ENCODE measurements at regions of chr10 and their contacts with region 1.

Region 1: GRCh38 chr10:122374237-122374869 is at the start of gene PLEKHA1:
- DNase-seq: peak; percentile 92 to 94 (median 93)
- H3K4me3 ChIP-seq: peak within 1 kb of the TSS; percentile 64 to 89
- H3K4me3 Mint-ChIP-seq: peak within 1 kb of the TSS; percentile 89 to 97 (median 96)
- H3K27ac ChIP-seq: peak within 1 kb of the TSS; percentile 94
- H3K27ac Mint-ChIP-seq: peak within 1 kb of the TSS; percentile 89 to 98 (median 96)
- H3K4me1 ChIP-seq: peaks cover 39% of the 10 kb centered on the region
- H3K4me1 Mint-ChIP-seq: peaks cover 23 to 51% (median 35%) of the 10 kb centered on the region in 4 donors
- H3K27me3 ChIP-seq: peaks cover 4% of the 10 kb centered on the region
- H3K27me3 Mint-ChIP-seq: peaks cover 7 to 11% of the 10 kb centered on the region in 2 donors
- total RNA-seq, gene PLEKHA1: 62.9 to 69.7 TPM

Region 2: GRCh38 chr10:121927841-121928527 is 446.4 kb before region 1 on chr10 and contains the start of gene ATE1:
- CTCF ChIA-PET with region 1: no interaction called
- POLR2A ChIA-PET with region 1: no interaction called
- intact Hi-C with region 1: loop called (anchors 2 kb)
- DNase-seq: peak; percentile 80 to 83 (median 81)
- H3K4me3 ChIP-seq: peak within 1 kb of the TSS; percentile 65 to 97
- H3K4me3 Mint-ChIP-seq: peak within 1 kb of the TSS; percentile 92 to 97 (median 94)
- H3K27ac ChIP-seq: peak within 1 kb of the TSS; percentile 90
- H3K27ac Mint-ChIP-seq: peak within 1 kb of the TSS; percentile 89 to 99 (median 97)
- H3K4me1 ChIP-seq: peaks cover 17% of the 10 kb centered on the region
- H3K4me1 Mint-ChIP-seq: peaks cover 13 to 38% (median 27%) of the 10 kb centered on the region in 4 donors
- H3K27me3 ChIP-seq: no peaks in the 10 kb centered on the region
- H3K27me3 Mint-ChIP-seq: no peaks in the 10 kb centered on the region
- total RNA-seq, gene ATE1: 24.5 to 26.2 TPM

Region 3: GRCh38 chr10:122336332-122336731 is 38.0 kb before region 1 on chr10:
- CTCF ChIA-PET with region 1: no interaction called
- POLR2A ChIA-PET with region 1: no interaction called
- intact Hi-C with region 1: no loop called
- DNase-seq: peak in 1 of 5 donors; percentile 38
- H3K4me3 ChIP-seq: no peak overlapping the region
- H3K4me3 Mint-ChIP-seq: no peak overlapping the region
- H3K27ac ChIP-seq: no peak overlapping the region
- H3K27ac Mint-ChIP-seq: no peak overlapping the region
- H3K4me1 ChIP-seq: no peaks in the 10 kb centered on the region
- H3K4me1 Mint-ChIP-seq: no peaks in the 10 kb centered on the region
- H3K27me3 ChIP-seq: no peaks in the 10 kb centered on the region
- H3K27me3 Mint-ChIP-seq: peaks cover 5 to 13% of the 10 kb centered on the region in 2 donors

Region 4: GRCh38 chr10:122391875-122392274 is 17.5 kb after region 1 on chr10:
- CTCF ChIA-PET with region 1: interaction called, 4 read pairs
- POLR2A ChIA-PET with region 1: interaction called, 14 read pairs
- intact Hi-C with region 1: loop called (anchors 2 kb)
- DNase-seq: no peak
- H3K4me3 ChIP-seq: no peak overlapping the region
- H3K4me3 Mint-ChIP-seq: no peak overlapping the region
- H3K27ac ChIP-seq: no peak overlapping the region
- H3K27ac Mint-ChIP-seq: no peak overlapping the region
- H3K4me1 ChIP-seq: peaks cover 14% of the 10 kb centered on the region
- H3K4me1 Mint-ChIP-seq: peaks cover 24 to 52% (median 39%) of the 10 kb centered on the region in 4 donors
- H3K27me3 ChIP-seq: no peaks in the 10 kb centered on the region
- H3K27me3 Mint-ChIP-seq: no peaks in the 10 kb centered on the region

Region 5: DNA sequence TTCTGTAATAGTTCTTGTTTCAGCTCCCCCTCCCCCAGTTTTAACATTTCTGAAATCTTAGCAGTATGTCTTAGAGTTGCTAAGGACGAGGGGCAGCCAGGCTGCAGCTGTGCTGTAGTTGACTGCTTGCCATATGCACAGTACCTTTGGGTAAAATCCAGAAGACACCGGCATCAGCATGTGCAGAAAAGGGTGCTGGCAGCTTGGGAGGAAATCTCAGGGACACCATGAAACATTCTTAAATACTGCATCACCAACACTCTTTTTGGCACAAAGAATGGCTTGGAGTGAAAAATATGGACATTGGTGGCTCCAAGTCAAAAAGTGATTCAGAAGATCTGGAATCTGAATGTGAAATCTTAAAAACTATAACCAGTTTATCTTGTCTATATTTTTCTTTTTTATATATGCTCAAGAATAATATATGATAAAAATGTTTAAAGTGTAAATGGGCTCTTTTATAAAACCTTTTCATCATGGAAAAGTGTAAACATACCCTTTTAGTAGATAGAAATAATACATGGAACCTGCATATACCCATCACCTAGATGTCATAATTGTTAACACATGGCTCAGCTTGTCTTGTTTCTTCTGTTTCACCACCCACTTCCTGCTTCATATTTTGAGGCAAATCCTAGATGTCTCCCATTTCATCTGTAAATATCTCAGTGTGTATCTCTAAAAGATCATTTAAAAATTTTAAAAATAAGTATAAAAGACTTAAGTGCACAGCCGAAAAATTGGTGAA is 45.7 kb after region 1 on chr10:
- CTCF ChIA-PET with region 1: interaction called, 17 read pairs
- POLR2A ChIA-PET with region 1: interaction called, 45 read pairs
- intact Hi-C with region 1: loop called (anchors 2 kb)
- DNase-seq: no peak
- H3K4me3 ChIP-seq: no peak overlapping the region
- H3K4me3 Mint-ChIP-seq: peak overlapping the region in 4 of 8 donors; percentile 38 to 71 (median 48)
- H3K27ac ChIP-seq: no peak overlapping the region
- H3K27ac Mint-ChIP-seq: peak overlapping the region in 6 of 7 donors; percentile 48 to 95 (median 88)
- H3K4me1 ChIP-seq: peaks cover 84% of the 10 kb centered on the region
- H3K4me1 Mint-ChIP-seq: peaks cover 58 to 90% (median 72%) of the 10 kb centered on the region in 4 donors
- H3K27me3 ChIP-seq: no peaks in the 10 kb centered on the region
- H3K27me3 Mint-ChIP-seq: no peaks in the 10 kb centered on the region

Region 6: GRCh38 chr10:122879339-122880273 is 505.3 kb after region 1 on chr10 and contains the start of gene FAM24B:
- CTCF ChIA-PET with region 1: no interaction called
- POLR2A ChIA-PET with region 1: no interaction called
- intact Hi-C with region 1: loop called (anchors 1 kb)
- DNase-seq: peak; percentile 90 to 96 (median 96)
- H3K4me3 ChIP-seq: peak within 1 kb of the TSS; percentile 47 to 79
- H3K4me3 Mint-ChIP-seq: peak within 1 kb of the TSS; percentile 91 to 95 (median 92)
- H3K27ac ChIP-seq: peak within 1 kb of the TSS; percentile 68
- H3K27ac Mint-ChIP-seq: peak within 1 kb of the TSS; percentile 79 to 97 (median 95)
- H3K4me1 ChIP-seq: peaks cover 41% of the 10 kb centered on the region
- H3K4me1 Mint-ChIP-seq: peaks cover 31 to 55% (median 43%) of the 10 kb centered on the region in 4 donors
- H3K27me3 ChIP-seq: no peaks in the 10 kb centered on the region
- H3K27me3 Mint-ChIP-seq: no peaks in the 10 kb centered on the region
- total RNA-seq, gene FAM24B: 10.8 to 12.8 TPM

Region 7: DNA sequence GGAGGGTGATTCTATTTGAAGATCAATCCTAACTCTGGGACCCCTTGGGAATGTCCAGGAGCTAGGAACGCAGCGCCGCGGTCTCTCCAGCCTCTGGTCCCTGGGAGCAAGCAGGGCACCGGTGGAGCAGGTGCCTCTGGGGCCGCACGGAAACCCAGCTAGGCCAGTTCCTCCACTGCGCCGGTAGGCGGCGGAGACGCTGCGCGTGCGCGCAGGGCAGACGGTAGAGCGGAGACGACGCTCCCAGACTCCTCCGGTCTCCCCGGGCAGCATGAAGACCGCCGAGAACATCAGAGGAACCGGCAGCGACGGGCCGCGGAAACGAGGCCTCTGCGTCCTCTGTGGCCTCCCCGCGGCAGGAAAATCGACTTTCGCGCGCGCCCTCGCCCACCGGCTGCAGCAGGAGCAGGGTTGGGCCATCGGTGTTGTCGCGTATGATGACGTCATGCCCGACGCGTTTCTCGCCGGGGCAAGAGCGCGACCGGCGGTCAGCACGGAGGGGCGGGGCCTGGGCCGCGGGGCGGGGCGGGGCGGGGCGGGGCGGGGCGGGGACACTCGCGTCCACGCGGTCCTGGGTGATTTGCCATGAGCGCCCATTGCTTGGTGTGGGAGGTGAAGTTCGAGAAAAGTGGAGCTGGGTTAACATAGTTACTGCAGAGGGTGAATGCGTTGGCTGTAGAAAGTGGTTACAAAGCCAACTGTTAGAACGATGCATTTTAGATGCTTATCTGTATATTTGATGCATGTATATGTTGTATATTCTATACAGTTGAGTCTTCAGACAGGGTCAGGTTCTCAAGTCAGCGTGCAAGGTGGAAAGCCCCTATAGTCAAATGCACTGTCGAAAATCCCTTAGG is 606.1 kb after region 1 on chr10 and contains the start of gene PSTK:
- CTCF ChIA-PET with region 1: no interaction called
- POLR2A ChIA-PET with region 1: no interaction called
- intact Hi-C with region 1: loop called (anchors 1 kb)
- DNase-seq: peak; percentile 90 to 94 (median 91)
- H3K4me3 ChIP-seq: peak within 1 kb of the TSS; percentile 19 to 88
- H3K4me3 Mint-ChIP-seq: peak within 1 kb of the TSS; percentile 90 to 94 (median 92)
- H3K27ac ChIP-seq: peak within 1 kb of the TSS; percentile 79
- H3K27ac Mint-ChIP-seq: peak within 1 kb of the TSS; percentile 96 to 98 (median 97)
- H3K4me1 ChIP-seq: peaks cover 13% of the 10 kb centered on the region
- H3K4me1 Mint-ChIP-seq: peaks cover 9 to 24% (median 15%) of the 10 kb centered on the region in 4 donors
- H3K27me3 ChIP-seq: no peaks in the 10 kb centered on the region
- H3K27me3 Mint-ChIP-seq: peaks cover 0 to 1% of the 10 kb centered on the region in 2 donors
- total RNA-seq, gene PSTK: 3.9 to 4.7 TPM